BJ (cell line): ENCODE measurements at regions of chr1 and their contacts with region 1.

Region 1: DNA sequence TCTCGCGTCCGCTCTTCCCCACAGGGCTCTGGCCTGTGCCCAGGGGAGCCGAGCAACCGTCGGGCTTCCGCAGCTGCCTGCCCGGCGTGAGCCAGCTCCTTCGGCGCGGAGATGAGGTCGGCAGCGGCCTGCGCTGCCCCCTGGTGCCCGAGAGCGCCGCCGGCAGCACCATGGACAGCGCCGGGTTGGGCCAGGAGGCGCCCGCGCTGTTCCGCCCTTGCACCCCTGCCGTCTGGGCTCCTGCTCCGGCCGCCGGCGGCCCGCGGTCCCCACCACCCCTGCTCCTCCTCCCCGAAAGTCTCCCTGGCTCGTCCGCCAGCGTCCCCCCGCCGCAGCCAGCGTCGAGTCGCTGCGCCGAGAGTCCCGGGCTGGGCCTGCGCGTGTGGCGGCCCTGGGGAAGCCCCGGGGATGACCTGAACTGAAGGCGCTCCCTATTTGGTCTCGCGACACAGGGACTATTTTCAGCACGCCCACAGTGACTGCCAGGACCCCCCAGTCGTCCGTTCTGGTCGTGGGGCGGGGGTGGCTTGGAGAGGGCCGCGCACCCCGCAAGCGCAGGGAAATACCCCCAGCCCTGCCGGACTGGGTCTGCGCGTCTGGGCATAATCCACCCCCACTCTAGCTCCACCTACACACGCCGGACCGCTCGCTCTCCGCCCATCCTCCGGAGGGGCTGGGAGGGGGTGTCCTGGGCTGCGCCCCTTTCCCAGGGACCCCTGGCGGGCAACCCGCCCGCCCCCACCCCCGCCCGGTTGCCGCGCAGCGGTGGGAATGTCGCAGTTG is 1.3 kb downstream of the HES3 start:
- DNase-seq: no peak
- H3K4me3 ChIP-seq: peak overlapping the region; percentile 32
- H3K27me3 ChIP-seq: peaks cover 27% of the 10 kb centered on the region
- CTCF ChIP-seq: peak; percentile 79

Region 2: DNA sequence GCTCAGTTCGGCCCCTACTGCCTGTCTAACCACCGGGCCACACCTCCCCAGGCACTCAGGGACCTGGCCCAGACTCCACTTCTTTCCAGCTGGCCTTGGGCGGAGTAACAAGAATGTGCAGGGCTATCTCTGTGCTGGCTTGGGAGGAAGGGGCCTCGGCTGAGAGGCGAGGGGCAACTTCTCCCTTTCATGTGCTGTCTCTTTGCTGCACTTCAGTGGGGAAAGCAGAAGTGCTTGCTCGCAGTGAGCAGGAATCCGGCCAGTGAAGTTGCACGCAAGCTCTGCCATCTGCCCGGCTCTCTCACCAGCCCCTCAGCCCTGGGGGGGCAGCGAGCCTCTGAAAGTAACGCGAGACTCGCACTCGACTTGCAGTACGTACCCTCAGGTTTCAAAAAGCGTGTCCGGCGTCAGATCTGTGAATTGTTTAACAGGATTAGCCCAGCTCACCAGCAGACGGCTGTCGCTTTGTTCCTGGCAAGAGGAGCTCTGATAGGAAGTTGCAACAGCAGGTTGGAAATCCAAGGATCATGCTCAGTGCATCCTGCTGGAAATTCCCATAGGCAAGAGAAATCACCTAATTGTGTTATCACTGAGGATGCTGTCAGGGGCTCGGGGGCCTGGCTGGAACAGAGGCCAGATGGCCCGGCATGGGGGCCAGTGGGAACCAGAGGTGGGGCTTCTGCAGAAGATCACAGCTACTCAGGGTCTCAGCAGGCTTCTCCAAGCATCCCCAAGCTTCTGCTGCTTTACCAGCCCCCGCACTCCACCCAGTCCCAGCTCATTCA is 474.1 kb before region 1 on chr1:
- CTCF ChIA-PET with region 1: no interaction called
- POLR2A ChIA-PET with region 1: no interaction called
- DNase-seq: no peak
- H3K4me3 ChIP-seq: no peak overlapping the region
- H3K27me3 ChIP-seq: no peaks in the 10 kb centered on the region
- CTCF ChIP-seq: no peak

Region 3: DNA sequence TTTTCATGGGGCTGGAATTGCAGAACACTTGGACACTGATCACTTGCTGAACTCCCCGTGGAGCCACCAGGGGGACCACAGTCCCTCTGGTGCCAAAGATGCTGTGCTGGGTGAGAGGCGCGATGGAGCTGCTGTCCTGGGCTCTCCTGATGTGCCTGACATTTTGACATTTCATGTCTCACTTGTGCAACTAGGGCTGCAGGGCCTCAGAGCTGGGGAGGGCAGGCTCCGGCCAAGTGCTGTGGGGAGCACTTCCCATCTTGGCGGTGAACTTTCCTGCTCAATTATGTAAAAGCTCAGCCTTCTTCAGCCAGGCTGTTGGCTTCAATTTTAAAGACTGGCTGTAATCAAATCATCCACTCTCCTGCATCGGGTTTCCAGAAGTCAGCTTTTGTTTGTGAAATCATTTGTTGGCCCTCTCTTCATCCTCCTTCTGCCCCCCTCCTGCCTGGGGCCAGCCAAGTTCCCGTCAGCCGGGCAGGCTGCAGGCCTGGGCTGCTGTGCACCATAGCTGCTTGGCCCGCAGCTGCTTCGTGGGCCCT is 162.8 kb before region 1 on chr1:
- CTCF ChIA-PET with region 1: interaction called, 12 read pairs
- POLR2A ChIA-PET with region 1: no interaction called
- DNase-seq: no peak
- H3K4me3 ChIP-seq: no peak overlapping the region
- H3K27me3 ChIP-seq: no peaks in the 10 kb centered on the region
- CTCF ChIP-seq: peak; percentile 54

Region 4: DNA sequence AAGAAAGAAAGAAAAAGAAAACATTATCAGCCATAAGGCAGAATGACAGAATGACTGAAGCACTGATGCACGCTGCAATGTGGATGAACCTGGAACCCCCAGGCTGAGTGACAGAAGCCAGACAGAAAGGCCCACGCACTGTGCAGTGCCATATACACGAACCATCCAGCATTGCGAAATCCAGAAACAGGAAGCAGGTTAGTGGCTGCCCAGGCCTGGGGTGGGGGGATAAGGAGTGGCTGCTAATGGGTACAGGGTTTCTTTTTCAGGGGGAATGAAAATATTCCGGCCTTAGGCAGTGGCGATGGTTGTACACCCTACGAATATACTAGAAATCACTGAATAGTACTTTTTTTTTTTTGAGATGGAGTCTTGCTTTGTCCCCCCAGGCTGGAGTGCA is 122.2 kb before region 1 on chr1:
- CTCF ChIA-PET with region 1: no interaction called
- POLR2A ChIA-PET with region 1: no interaction called
- DNase-seq: no peak
- H3K4me3 ChIP-seq: no peak overlapping the region
- H3K27me3 ChIP-seq: no peaks in the 10 kb centered on the region
- CTCF ChIP-seq: no peak

Region 5: DNA sequence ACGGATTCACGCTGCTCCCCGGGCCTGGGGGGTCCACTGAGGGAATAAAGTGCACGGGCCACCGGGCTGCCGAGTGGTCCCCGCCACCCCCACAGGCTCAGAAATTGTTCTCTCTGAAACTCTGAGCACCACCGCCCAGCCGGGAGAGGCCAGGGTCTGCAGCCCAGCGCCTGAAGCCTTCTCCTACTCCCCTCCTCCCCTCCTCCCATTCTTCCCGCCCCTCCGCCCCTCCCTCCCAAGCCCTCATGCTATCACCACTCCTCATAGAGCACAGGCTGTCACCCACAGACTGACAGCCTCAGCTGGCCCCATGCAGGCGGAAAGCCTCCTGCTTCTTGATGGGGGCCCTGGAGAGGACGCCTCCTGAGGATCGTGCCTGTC is 16.3 kb after region 1 on chr1:
- CTCF ChIA-PET with region 1: interaction called, 20 read pairs
- POLR2A ChIA-PET with region 1: no interaction called
- DNase-seq: no peak
- H3K4me3 ChIP-seq: peak overlapping the region; percentile 75
- H3K27me3 ChIP-seq: no peaks in the 10 kb centered on the region
- CTCF ChIP-seq: no peak

Region 6: DNA sequence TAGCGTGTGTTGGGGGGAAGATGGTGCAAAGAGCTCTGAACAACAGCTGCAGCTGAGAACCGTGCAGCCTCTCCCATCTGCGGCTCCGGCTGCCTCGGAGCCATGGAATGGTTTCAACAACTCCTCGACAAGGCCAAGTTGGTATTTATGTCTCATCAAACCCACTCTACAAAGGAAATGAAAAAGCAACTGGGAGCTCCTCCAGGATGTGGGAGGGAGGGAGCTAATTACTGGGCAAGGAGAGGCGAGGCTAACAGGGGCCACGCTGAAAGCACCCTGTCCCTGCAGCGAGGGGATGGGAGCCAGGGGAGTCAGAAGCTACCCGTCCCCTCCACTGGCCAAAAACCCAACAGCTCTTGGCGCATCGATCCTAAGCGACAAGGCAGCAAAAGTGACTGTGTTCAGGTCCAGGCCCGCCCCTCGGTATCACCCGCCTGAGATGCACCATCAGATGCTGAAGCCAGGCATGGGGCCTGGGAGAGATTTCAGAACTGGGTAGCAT is 85.2 kb after region 1 on chr1:
- CTCF ChIA-PET with region 1: interaction called, 264 read pairs
- POLR2A ChIA-PET with region 1: no interaction called
- DNase-seq: peak; percentile 62
- H3K4me3 ChIP-seq: no peak overlapping the region
- H3K27me3 ChIP-seq: no peaks in the 10 kb centered on the region
- CTCF ChIP-seq: no peak

Region 7: GRCh38 chr1:6359216-6360116 is 114.2 kb after region 1 on chr1:
- CTCF ChIA-PET with region 1: interaction called, 11 read pairs
- POLR2A ChIA-PET with region 1: no interaction called
- DNase-seq: no peak
- H3K4me3 ChIP-seq: no peak overlapping the region
- H3K27me3 ChIP-seq: no peaks in the 10 kb centered on the region
- CTCF ChIP-seq: no peak

Region 8: DNA sequence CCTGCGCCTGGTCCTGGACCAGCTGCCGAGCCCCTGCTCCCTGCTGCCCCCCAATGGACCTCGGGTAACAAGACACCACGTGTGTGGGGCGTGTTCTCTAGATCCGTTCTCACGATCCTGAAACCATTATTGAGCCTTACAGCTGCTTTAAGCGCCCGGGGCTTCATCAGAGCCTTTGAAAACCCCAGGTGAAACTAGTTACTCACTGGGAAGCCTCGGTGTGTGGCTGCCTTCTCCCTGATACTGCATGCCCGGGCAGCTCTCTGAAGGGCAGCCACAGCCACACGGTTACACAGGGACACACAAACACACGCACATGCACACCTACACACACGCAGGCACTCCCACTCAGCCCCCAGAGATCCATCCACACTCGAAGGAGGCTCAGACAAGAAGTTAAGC is 169.2 kb after region 1 on chr1:
- CTCF ChIA-PET with region 1: interaction called, 18 read pairs
- POLR2A ChIA-PET with region 1: no interaction called
- DNase-seq: no peak
- H3K4me3 ChIP-seq: no peak overlapping the region
- H3K27me3 ChIP-seq: peaks cover 27% of the 10 kb centered on the region
- CTCF ChIP-seq: peak; percentile 80